ENCODE measurements at regions of chr14 and their contacts with region 1.

Region 1: DNA sequence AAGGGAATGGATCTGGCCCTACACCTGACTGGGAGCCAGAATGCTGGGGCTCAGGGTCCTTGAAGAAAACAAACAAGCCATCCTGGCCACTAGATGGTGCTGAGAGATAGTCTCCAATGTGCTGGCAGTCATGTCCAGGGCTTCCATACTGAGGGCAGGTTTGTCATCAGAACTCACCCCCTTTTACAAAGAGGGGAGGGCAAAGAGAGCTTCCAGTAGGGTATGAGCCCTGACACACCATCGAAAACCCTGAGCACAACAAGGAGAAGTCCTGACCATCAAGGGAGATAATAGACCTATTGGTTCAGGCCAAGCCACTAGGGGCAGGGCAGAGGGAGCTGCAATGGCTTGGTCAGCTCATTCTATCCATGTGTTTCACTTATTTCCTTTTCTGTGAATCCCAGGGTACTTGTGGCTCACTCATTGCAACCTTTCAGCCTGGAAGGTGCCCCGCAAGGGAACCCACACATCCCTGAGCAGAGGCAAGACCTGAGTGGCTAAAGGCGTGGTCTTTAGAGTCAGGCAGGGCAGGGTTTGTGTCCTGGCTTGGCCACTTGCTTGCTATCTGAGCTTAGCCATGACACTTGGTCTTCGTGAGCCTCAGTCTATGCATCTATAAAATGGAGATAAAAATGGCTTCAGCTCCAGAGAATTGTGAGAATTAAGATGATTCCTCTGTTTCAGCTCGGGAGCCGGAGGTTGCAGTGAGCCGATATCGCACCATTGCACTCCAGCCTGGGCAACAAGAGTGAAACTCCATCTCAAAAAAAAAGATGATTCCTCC is 6.2 kb upstream of the PLEKHH1 start:
- DNase-seq: peak; percentile 59 to 62
- H3K4me3 ChIP-seq: no peak overlapping the region
- H3K27ac ChIP-seq: peak overlapping the region in 2 of 3 donors; percentile 1 to 38
- H3K4me1 ChIP-seq: peaks cover 41 to 55% of the 10 kb centered on the region in 2 donors
- H3K27me3 ChIP-seq: no peaks in the 10 kb centered on the region
- CTCF ChIP-seq: peak; percentile 17 to 95 (median 64)
- POLR2A ChIP-seq: no peak

Region 2: GRCh38 chr14:67571272-67571850 is 44.5 kb after region 1 on chr14:
- intact Hi-C with region 1: loop called (anchors 5 kb)
- DNase-seq: peak; percentile 61 to 62
- H3K4me3 ChIP-seq: no peak overlapping the region
- H3K27ac ChIP-seq: no peak overlapping the region
- H3K4me1 ChIP-seq: peaks cover 15 to 17% of the 10 kb centered on the region in 2 donors
- H3K27me3 ChIP-seq: no peaks in the 10 kb centered on the region
- CTCF ChIP-seq: peak; percentile 35 to 77 (median 68)
- POLR2A ChIP-seq: no peak

Measured in thyroid gland (tissue), 4 donors.